ENCODE measurements at regions of chr18 and their contacts with region 1.

Region 1: GRCh38 chr18:34122724-34123334 is 101.9 kb downstream of the NOL4 start:
- DNase-seq: peak; percentile 21
- ATAC-seq: peak; percentile 73
- H3K4me3 Mint-ChIP-seq: no peak overlapping the region
- H3K27ac Mint-ChIP-seq: no peak overlapping the region
- H3K4me1 Mint-ChIP-seq: no peaks in the 10 kb centered on the region
- H3K27me3 Mint-ChIP-seq: peaks cover 42% of the 10 kb centered on the region
- CTCF ChIP-seq: peak; percentile 70

Region 2: GRCh38 chr18:33034212-33034611 is 1088.6 kb before region 1 on chr18:
- CTCF ChIA-PET with region 1: no interaction called
- POLR2A ChIA-PET with region 1: no interaction called
- DNase-seq: no peak
- ATAC-seq: no peak
- H3K4me3 Mint-ChIP-seq: no peak overlapping the region
- H3K27ac Mint-ChIP-seq: no peak overlapping the region
- H3K4me1 Mint-ChIP-seq: no peaks in the 10 kb centered on the region
- H3K27me3 Mint-ChIP-seq: no peaks in the 10 kb centered on the region
- CTCF ChIP-seq: no peak

Region 3: GRCh38 chr18:33839441-33840211 is 283.2 kb before region 1 on chr18:
- CTCF ChIA-PET with region 1: interaction called, 11 read pairs
- POLR2A ChIA-PET with region 1: no interaction called
- DNase-seq: no peak
- ATAC-seq: peak; percentile 51
- H3K4me3 Mint-ChIP-seq: no peak overlapping the region
- H3K27ac Mint-ChIP-seq: no peak overlapping the region
- H3K4me1 Mint-ChIP-seq: peaks cover 58% of the 10 kb centered on the region
- H3K27me3 Mint-ChIP-seq: peaks cover 3% of the 10 kb centered on the region
- CTCF ChIP-seq: peak; percentile 57; the same call in 1 of the 2 replicates

Region 4: DNA sequence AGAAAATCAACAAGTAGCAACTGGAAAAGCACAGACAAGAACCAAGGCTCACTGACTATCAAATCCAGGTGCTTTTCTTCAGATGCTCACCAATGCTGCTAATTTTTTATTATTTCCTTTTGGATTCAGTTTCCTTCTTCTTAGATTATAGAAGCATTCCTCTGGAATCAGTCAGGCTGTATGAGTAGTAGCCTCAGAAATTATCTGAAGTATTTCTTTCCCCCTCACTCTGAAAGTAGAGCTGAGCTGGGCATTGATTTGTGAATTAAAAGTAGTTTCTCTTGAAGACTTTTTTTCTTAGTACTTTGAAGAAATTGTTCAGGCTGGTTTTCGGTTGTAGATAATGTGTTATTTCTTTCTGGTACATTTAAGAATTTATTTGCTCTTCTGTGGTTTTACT is 171.8 kb before region 1 on chr18:
- CTCF ChIA-PET with region 1: no interaction called
- POLR2A ChIA-PET with region 1: no interaction called
- DNase-seq: no peak
- ATAC-seq: no peak
- H3K4me3 Mint-ChIP-seq: no peak overlapping the region
- H3K27ac Mint-ChIP-seq: no peak overlapping the region
- H3K4me1 Mint-ChIP-seq: no peaks in the 10 kb centered on the region
- H3K27me3 Mint-ChIP-seq: no peaks in the 10 kb centered on the region
- CTCF ChIP-seq: no peak

Region 5: GRCh38 chr18:34158881-34159690 is 36.3 kb after region 1 on chr18:
- CTCF ChIA-PET with region 1: interaction called, 14 read pairs
- POLR2A ChIA-PET with region 1: no interaction called
- DNase-seq: peak; percentile 88
- ATAC-seq: peak; percentile 96
- H3K4me3 Mint-ChIP-seq: peak overlapping the region; percentile 77
- H3K27ac Mint-ChIP-seq: no peak overlapping the region
- H3K4me1 Mint-ChIP-seq: peaks cover 8% of the 10 kb centered on the region
- H3K27me3 Mint-ChIP-seq: peaks cover 60% of the 10 kb centered on the region
- CTCF ChIP-seq: no peak

Region 6: DNA sequence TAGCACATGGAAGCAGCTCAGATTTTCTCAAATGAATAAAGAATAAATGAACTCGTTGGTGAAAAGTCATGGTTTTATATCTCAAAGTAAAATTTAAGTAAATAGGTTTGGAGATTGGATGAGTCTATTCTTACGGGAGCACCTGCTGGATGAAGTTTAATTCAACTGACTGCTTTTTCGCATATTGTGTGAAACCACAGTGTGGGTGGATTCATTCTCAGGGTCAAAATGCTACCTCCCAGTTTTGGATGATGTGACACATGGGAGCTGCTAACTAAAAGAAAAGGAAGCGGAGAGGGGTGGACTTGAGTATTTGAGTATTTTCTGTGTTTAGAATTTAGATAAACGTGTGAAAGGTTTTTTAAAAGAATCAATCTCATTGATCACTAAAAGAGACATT is 193.1 kb after region 1 on chr18:
- CTCF ChIA-PET with region 1: interaction called, 72 read pairs
- POLR2A ChIA-PET with region 1: interaction called, 3 read pairs
- DNase-seq: no peak
- ATAC-seq: no peak
- H3K4me3 Mint-ChIP-seq: no peak overlapping the region
- H3K27ac Mint-ChIP-seq: no peak overlapping the region
- H3K4me1 Mint-ChIP-seq: 0 out of 2 replicates have a peak, but pooled peaks cover 3% of the 10 kb centered on the region
- H3K27me3 Mint-ChIP-seq: no peaks in the 10 kb centered on the region
- CTCF ChIP-seq: no peak

Region 7: GRCh38 chr18:34322365-34323289 is 199.8 kb after region 1 on chr18:
- CTCF ChIA-PET with region 1: interaction called, 72 read pairs
- POLR2A ChIA-PET with region 1: interaction called, 3 read pairs
- DNase-seq: peak; percentile 66
- ATAC-seq: peak; percentile 55; the same call in 1 of the 2 replicates
- H3K4me3 Mint-ChIP-seq: no peak overlapping the region
- H3K27ac Mint-ChIP-seq: no peak overlapping the region
- H3K4me1 Mint-ChIP-seq: peaks cover 7% of the 10 kb centered on the region; the same call in 1 of the 2 replicates
- H3K27me3 Mint-ChIP-seq: no peaks in the 10 kb centered on the region
- CTCF ChIP-seq: peak; percentile 52; the same call in 1 of the 2 replicates

Region 8: GRCh38 chr18:34380326-34380725 is 257.5 kb after region 1 on chr18:
- CTCF ChIA-PET with region 1: no interaction called
- POLR2A ChIA-PET with region 1: no interaction called
- DNase-seq: no peak
- ATAC-seq: no peak
- H3K4me3 Mint-ChIP-seq: no peak overlapping the region
- H3K27ac Mint-ChIP-seq: no peak overlapping the region
- H3K4me1 Mint-ChIP-seq: no peaks in the 10 kb centered on the region
- H3K27me3 Mint-ChIP-seq: no peaks in the 10 kb centered on the region
- CTCF ChIP-seq: no peak

Measured in WTC11 (cell line).